OCI-LY7 (cell line): ENCODE measurements at regions of chr17 and their contacts with region 1.

Region 1: DNA sequence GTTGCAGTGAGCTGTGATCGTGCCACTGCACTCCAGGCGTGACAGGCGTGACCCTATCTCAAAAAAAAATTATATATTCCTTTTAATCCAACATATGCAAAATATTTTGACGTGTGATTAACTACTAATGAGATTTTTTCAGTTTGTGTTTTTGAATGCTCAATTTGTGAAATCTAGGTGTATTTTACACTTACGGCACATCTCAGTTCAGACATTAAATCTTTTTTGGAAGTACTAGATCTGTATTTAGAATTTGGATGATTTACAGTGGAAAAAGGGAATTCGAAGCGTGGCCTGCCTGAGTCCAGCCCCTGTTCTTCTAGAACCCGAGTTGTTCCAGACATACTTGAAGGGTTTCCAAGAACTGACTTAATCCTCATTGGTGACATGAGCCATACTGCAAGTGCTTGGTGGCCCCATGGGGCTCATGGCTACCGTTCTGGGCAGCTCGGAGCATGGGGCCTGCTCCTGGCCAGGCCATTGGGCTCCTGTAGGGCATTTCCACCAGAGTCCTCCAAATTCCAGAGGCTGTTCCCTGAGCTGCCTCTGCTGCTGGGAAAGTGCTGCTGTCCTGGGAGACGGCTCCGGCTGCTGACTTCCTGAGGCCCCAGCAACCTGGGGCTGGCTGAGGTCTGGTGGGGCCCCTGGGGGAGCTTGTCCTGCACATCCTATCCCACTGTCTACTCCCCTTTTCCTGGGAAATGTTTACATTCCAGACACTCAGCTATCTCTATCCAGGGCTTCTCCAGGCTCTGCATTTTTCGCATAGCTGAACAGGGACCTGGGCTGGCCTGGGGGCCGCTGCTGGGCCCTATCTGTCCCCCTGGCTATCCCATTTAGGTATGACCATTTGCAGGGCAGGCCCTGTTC is 27.2 kb downstream of the LLGL2 start:
- DNase-seq: no peak
- H3K4me3 ChIP-seq: no peak overlapping the region
- H3K27ac ChIP-seq: no peak overlapping the region
- H3K4me1 ChIP-seq: no peaks in the 10 kb centered on the region
- CTCF ChIP-seq: no peak

Region 2: DNA sequence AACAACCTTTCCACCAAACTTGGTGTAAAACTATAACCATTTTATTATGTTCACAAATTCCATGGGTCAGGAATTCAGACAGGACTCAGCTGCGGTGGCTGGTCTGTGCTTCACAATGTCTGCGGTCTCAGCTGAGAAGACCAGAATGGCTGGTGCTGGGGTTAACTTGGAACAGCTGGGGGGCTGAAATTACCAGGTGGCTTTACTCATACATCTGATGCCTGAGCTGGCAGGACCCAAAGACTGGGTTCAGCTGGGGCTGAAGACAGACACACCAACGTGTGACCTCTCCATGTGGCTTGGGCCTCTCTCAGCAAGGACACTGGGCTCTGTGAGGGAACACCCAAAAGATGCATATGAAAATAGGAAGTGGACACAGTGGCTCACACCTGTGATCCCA is 574.4 kb before region 1 on chr17:
- CTCF ChIA-PET with region 1: interaction called, 10 read pairs
- POLR2A ChIA-PET with region 1: no interaction called
- intact Hi-C with region 1: no loop called
- DNase-seq: no peak
- H3K4me3 ChIP-seq: no peak overlapping the region
- H3K27ac ChIP-seq: no peak overlapping the region
- H3K4me1 ChIP-seq: peaks cover 10% of the 10 kb centered on the region
- CTCF ChIP-seq: no peak